ENCODE measurements at regions of chr17 and their contacts with region 1.

Region 1: GRCh38 chr17:58391302-58391984 is 25.9 kb downstream of the RNF43 start:
- DNase-seq: peak; percentile 86 to 94
- H3K4me3 ChIP-seq: no peak overlapping the region
- H3K27ac ChIP-seq: no peak overlapping the region
- H3K4me1 ChIP-seq: peaks cover 60% of the 10 kb centered on the region
- H3K27me3 ChIP-seq: peaks cover 33% of the 10 kb centered on the region; the same call in 1 of the 2 replicates
- CTCF ChIP-seq: no peak

Region 2: DNA sequence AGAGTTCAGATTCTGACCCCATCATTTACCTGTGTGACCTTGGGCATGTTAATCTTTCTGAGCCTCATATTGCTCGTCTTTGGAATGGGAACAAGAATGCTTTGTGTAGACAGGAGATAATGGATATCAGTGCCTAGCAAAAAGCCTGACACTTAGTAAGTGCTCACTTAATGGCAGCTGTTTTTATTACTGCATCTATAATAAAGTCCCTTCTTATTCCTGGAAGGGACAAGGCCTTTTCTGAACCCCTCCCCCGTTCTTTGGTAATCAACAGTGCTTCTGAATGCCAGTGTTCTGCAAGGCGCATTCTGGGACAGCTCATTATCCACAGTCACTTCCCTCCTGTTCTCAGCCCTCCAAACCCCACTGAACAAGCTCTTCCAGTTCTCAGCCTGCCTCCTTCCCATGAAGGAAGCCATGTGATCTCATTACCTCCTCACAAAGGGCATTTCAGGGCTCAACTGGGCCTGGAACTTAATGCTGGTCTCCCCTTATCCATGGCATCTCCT is 14.3 kb before region 1 on chr17:
- CTCF ChIA-PET with region 1: no interaction called
- POLR2A ChIA-PET with region 1: no interaction called
- intact Hi-C with region 1: loop called (anchors 2 kb)
- DNase-seq: peak; percentile 57 to 92
- H3K4me3 ChIP-seq: no peak overlapping the region
- H3K27ac ChIP-seq: no peak overlapping the region
- H3K4me1 ChIP-seq: peaks cover 23% of the 10 kb centered on the region
- H3K27me3 ChIP-seq: peaks cover 14% of the 10 kb centered on the region; the same call in 1 of the 2 replicates
- CTCF ChIP-seq: no peak

Region 3: GRCh38 chr17:58913585-58914444 is 522.4 kb after region 1 on chr17:
- CTCF ChIA-PET with region 1: no interaction called
- POLR2A ChIA-PET with region 1: no interaction called
- intact Hi-C with region 1: no loop called
- DNase-seq: no peak
- H3K4me3 ChIP-seq: no peak overlapping the region
- H3K27ac ChIP-seq: no peak overlapping the region
- H3K4me1 ChIP-seq: peaks cover 10% of the 10 kb centered on the region
- H3K27me3 ChIP-seq: no peaks in the 10 kb centered on the region
- CTCF ChIP-seq: no peak

Region 4: GRCh38 chr17:59972778-59973177 is 1581.3 kb after region 1 on chr17:
- CTCF ChIA-PET with region 1: no interaction called
- POLR2A ChIA-PET with region 1: no interaction called
- intact Hi-C with region 1: no loop called
- DNase-seq: no peak
- H3K4me3 ChIP-seq: no peak overlapping the region
- H3K27ac ChIP-seq: no peak overlapping the region
- H3K4me1 ChIP-seq: no peaks in the 10 kb centered on the region
- H3K27me3 ChIP-seq: no peaks in the 10 kb centered on the region
- CTCF ChIP-seq: no peak